Cardiac septum (tissue), 1 donor: ENCODE measurements at regions of chr20 and their contacts with region 1.

Region 1: GRCh38 chr20:18822832-18823231 is 9.2 kb downstream of the SCP2D1 start:
- DNase-seq: no peak

Region 2: GRCh38 chr20:18754653-18755045 is 68.2 kb before region 1 on chr20:
- intact Hi-C with region 1: no loop called
- DNase-seq: no peak

Region 3: GRCh38 chr20:18790787-18791186 is 32.0 kb before region 1 on chr20:
- intact Hi-C with region 1: no loop called
- DNase-seq: no peak

Region 4: GRCh38 chr20:18886756-18887155 is 63.9 kb after region 1 on chr20:
- intact Hi-C with region 1: loop called (anchors 10 kb)
- DNase-seq: no peak